Activated CD4-positive, alpha-beta memory T cell treated with anti-CD3 and anti-CD28 coated beads for 36 hours (primary cell): ENCODE measurements at regions of chr1 and their contacts with region 1.

Region 1: DNA sequence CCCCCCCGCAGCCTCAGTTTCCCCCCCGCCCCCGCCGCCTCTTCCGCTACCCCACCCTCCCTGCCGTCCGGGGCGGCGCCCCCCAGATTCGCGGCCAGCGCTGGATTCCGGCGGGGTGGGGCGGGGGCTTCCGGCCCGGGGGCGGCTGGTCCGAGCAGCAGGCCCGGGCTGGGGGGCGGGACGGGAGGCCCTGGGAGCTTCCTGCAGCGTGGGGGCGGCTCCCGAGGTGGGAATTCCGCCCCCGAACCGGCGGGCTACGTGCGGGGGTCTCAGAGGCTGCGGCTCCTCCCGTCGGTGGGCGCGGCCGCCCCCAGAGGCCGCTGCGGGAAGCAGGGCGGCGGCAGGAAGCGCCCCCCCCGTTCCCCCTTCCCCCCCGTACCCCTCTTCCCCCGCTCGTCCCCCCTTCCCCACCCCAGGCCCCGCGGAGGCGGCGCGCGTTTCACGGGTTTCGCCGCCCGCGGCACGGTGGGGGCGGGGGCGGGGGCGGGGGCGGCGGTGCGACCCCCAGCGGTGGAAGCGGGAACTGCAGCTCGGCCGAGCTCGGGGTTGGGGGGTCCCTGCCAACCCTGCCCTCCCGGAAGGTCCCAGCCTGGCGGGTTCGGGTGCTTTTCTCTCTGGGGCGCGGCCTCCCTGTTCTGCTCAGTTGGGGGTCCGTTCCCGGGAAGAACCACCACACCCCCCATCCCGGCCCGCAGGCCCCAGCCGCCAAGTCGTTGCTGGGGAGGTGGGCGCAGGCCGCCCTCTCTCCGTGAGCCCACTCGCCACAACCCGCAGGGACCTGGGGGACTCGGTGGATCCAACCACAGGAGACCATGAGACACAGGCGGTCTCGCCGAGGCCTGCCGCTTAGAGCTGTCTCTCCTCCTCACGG is 76.3 kb downstream of the MORN1 start:
- DNase-seq: peak; percentile 70
- H3K4me3 Mint-ChIP-seq: peak overlapping the region; percentile 5
- H3K27ac Mint-ChIP-seq: peak overlapping the region; percentile 8
- H3K4me1 Mint-ChIP-seq: no peaks in the 10 kb centered on the region
- H3K27me3 Mint-ChIP-seq: no peaks in the 10 kb centered on the region

Region 2: DNA sequence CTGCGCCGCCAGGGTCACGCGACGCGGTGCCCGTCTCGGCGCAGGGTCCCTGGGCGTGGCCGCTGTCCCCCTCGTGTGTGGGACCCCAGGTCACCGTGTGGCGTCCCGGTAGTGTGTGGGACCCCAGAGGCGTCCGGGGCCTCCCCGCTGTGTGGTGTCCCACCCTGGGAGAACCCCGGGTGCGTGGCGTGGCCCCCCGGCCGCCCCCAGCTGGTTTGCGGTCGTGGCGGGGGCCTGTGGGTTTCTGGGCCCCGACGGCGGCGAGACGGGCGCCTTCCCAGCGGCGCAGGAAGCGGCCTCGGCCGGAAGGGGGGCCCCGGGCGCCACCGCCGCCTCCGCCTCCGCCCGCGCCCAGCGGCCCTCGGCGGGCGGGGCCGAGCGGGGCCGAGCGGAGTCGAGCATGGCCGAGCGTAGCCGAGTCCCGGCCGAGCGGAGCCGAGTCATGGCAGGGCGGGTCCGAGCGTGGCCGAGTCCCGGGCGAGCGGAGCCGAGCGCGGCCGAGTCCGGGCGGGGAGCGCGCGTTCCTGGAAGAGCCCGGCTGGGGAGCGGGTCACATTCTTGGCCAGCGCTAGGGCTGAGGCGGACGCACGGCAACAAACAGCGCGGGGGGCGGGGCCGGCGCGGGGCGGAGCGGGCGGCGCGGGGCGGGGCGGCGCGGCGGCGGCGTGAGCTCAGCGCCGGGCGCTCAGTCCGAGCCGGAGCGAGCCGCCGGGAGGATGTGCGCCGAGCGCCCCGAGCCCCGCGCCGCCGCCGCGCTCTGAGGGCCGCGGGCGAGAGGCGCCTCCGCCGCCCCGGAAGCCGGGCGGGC is 87.5 kb before region 1 on chr1:
- CTCF ChIA-PET with region 1: interaction called, 11 read pairs
- POLR2A ChIA-PET with region 1: interaction called, 6 read pairs
- intact Hi-C with region 1: no loop called
- DNase-seq: peak; percentile 97
- H3K4me3 Mint-ChIP-seq: peak overlapping the region; percentile 55
- H3K27ac Mint-ChIP-seq: no peak overlapping the region
- H3K4me1 Mint-ChIP-seq: peaks cover 9% of the 10 kb centered on the region
- H3K27me3 Mint-ChIP-seq: peaks cover 1% of the 10 kb centered on the region

Region 3: GRCh38 chr1:2279210-2279639 is 35.8 kb before region 1 on chr1:
- CTCF ChIA-PET with region 1: no interaction called
- POLR2A ChIA-PET with region 1: no interaction called
- intact Hi-C with region 1: no loop called
- DNase-seq: no peak
- H3K4me3 Mint-ChIP-seq: no peak overlapping the region
- H3K27ac Mint-ChIP-seq: peak overlapping the region; percentile 23
- H3K4me1 Mint-ChIP-seq: peaks cover 35% of the 10 kb centered on the region
- H3K27me3 Mint-ChIP-seq: no peaks in the 10 kb centered on the region

Region 4: DNA sequence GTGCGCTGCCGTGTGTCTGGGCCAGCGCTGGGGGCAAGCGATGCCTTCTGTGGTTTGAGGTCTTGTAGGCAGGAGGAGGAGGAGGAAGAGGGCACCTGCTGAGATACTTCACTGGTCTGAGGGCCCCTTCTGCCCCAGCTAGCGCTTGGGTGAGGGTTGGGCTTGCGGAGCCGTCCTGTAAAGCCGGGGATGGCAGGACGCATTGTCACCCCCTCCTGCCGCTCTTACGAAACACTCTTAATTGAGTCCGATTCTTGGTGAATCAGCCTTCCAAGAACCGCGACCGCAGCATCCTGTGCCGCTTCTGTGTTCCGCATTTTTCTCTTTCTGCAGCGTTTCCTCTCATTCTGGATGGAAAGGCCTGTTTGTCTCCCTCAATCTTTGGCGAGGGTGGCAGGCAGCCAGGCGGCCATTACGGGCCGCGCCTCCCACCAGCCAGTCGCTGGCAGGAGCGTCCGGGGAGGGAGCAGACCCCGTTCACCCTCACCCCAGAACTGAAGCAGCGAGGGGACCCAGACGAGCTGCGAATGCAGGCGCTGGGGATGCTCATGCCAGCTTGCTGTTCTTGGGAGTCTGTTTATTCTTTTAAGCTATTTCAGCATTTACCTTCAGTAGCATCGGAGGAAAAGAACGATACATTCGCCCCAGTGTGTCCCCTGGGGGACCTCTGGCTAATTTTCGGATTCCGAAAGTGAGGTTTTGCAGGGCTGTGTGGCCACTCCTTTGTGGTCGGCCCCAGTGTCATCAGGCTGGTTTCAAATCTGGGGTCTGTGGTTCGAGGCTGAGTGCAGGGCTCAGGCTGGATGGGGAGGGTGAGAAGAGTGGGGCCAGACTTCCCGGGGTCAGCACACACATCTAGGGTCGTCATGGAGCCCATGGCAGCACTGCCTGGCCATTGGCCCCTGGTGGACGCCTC is 24.2 kb before region 1 on chr1:
- CTCF ChIA-PET with region 1: interaction called, 12 read pairs
- POLR2A ChIA-PET with region 1: no interaction called
- intact Hi-C with region 1: no loop called
- DNase-seq: peak; percentile 94
- H3K4me3 Mint-ChIP-seq: peak overlapping the region; percentile 70
- H3K27ac Mint-ChIP-seq: peak overlapping the region; percentile 96
- H3K4me1 Mint-ChIP-seq: peaks cover 81% of the 10 kb centered on the region
- H3K27me3 Mint-ChIP-seq: no peaks in the 10 kb centered on the region

Region 5: DNA sequence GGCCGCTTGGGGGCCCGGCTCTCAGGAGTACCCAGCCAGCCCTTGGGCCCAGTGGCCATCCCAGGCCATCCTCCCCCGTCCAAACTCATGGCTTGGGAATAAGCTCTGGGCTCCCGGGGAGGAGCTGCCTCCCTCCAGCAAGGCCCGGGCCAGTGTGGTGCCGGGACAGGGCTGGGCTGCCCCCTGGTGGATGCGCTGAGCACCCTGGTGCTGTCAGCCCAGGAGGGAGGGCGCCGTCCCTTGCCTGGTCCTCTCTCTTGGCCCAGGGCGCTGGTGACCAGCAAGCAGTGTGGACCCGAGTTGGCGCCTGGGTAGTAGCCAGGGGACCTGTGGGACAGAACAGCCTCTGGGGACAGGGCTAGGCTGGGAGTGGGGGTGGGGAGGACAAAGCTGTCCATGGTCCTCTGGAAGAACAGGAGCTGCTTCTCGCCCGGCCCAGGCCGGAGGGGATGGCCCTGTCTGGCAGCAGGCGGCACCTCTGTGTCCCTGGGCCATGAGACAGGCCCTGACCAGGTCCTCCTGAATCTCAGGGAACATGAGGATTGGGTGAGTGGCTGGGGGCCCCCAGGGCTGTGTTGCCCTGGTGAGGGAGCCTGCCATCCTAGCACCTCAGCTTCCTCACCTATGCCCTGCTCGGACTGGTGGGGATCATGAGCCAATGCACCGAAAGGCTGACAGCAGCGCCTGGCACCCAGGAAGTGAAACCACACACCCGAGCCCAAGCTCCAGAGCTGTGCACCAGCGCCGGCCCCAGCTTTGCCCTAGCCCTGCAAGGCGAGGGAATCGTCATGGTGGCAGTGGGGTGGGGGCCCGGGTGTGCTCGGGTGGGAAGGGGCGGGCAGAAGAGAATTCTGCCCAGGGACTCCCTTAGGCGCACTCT is 66.9 kb after region 1 on chr1:
- CTCF ChIA-PET with region 1: interaction called, 13 read pairs
- POLR2A ChIA-PET with region 1: no interaction called
- intact Hi-C with region 1: no loop called
- DNase-seq: peak; percentile 85
- H3K4me3 Mint-ChIP-seq: no peak overlapping the region
- H3K27ac Mint-ChIP-seq: no peak overlapping the region
- H3K4me1 Mint-ChIP-seq: no peaks in the 10 kb centered on the region
- H3K27me3 Mint-ChIP-seq: no peaks in the 10 kb centered on the region

Region 6: GRCh38 chr1:2391041-2391930 is 76.2 kb after region 1 on chr1 and contains the starts of genes MORN1 and RER1:
- CTCF ChIA-PET with region 1: interaction called, 3 read pairs
- POLR2A ChIA-PET with region 1: interaction called, 5 read pairs
- intact Hi-C with region 1: loop called (anchors 5 kb)
- DNase-seq: peak; percentile 99
- H3K4me3 Mint-ChIP-seq: peak within 1 kb of the TSS; percentile 93
- H3K27ac Mint-ChIP-seq: peak within 1 kb of the TSS; percentile 84
- H3K4me1 Mint-ChIP-seq: peaks cover 39% of the 10 kb centered on the region
- H3K27me3 Mint-ChIP-seq: no peaks in the 10 kb centered on the region
- total RNA-seq, gene MORN1: 5.4 to 6.3 TPM
- total RNA-seq, gene RER1: 148 to 154 TPM

Region 7: GRCh38 chr1:3323021-3323795 is 1008.2 kb after region 1 on chr1:
- CTCF ChIA-PET with region 1: no interaction called
- POLR2A ChIA-PET with region 1: no interaction called
- intact Hi-C with region 1: no loop called
- DNase-seq: no peak
- H3K4me3 Mint-ChIP-seq: no peak overlapping the region
- H3K27ac Mint-ChIP-seq: no peak overlapping the region
- H3K4me1 Mint-ChIP-seq: no peaks in the 10 kb centered on the region
- H3K27me3 Mint-ChIP-seq: peaks cover 2% of the 10 kb centered on the region